ENCODE measurements at regions of chrX and their contacts with region 1.

Region 1: DNA sequence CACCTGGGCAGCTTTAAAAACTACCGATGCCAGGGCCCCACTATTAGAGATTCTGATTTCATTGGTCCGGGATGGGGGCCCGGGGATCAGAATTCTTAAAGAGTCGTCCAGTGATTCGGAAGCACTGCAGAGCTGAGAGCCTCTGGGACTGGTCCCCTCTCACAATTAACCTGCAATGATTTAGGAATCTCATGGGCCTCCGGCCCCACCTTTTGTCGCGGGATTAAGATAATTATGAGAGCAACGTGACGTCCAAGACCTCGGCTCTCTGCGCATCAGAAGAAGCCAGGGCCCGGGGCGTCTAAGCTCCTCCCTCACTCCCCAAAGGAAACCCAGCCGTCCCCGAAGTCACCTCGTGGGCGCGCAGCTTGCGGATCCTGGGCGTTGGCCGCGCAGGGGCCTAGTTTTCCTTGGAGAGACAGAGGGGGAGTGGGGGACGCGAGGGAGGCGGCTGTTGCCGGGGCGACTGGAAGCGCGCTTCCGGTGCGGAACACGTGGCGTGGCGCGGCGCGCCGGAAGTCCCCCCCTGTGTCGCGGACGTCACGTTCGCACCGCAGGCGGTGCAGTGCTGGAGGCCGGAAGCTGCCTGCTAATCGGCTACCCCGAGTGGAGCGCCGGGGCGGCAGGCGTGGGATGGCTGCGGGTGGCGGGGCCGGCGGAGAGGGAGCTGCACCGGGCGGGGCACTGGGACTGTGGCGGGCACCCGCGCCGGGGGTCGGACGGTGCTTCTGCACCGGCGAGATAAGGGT is at the start of gene GEMIN8:
- DNase-seq: peak; percentile 88
- H3K4me3 ChIP-seq: peak within 1 kb of the TSS; percentile 69
- H3K27ac ChIP-seq: peak within 1 kb of the TSS; percentile 78
- H3K4me1 ChIP-seq: no peaks in the 10 kb centered on the region
- H3K27me3 ChIP-seq: no peaks in the 10 kb centered on the region
- CTCF ChIP-seq: no peak
- total RNA-seq, gene GEMIN8: 16.4 to 20.9 TPM

Region 2: GRCh38 chrX:13506574-13506973 is 523.0 kb before region 1 on chrX:
- intact Hi-C with region 1: loop called (anchors 2 kb)
- DNase-seq: peak; percentile 39
- H3K4me3 ChIP-seq: no peak overlapping the region
- H3K27ac ChIP-seq: no peak overlapping the region
- H3K4me1 ChIP-seq: no peaks in the 10 kb centered on the region
- H3K27me3 ChIP-seq: peaks cover 6% of the 10 kb centered on the region
- CTCF ChIP-seq: peak; percentile 80

Region 3: GRCh38 chrX:13750204-13750603 is 279.4 kb before region 1 on chrX:
- intact Hi-C with region 1: loop called (anchors 5 kb)
- DNase-seq: no peak
- H3K4me3 ChIP-seq: no peak overlapping the region
- H3K27ac ChIP-seq: no peak overlapping the region
- H3K4me1 ChIP-seq: no peaks in the 10 kb centered on the region
- H3K27me3 ChIP-seq: no peaks in the 10 kb centered on the region
- CTCF ChIP-seq: peak; percentile 40

Region 4: DNA sequence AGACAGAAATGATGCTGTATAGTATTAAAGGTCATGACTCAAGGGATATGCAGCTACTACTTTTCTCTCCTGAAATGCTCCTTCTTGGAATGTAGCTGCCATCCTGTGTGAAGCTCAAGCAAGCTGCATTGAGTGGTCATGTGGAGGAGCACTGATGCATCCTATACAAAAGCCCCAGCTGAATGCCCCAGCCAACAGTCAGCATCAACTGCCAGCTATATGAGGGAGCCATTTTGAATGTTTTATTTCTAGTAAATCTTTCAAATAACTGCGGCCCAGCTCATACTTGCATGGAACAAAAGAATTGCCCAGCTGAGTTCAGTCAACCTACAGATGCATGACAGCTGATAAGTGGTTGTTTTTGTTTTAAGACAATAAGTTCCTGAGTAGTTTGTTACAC is 165.1 kb after region 1 on chrX:
- intact Hi-C with region 1: no loop called
- DNase-seq: no peak
- H3K4me3 ChIP-seq: no peak overlapping the region
- H3K27ac ChIP-seq: no peak overlapping the region
- H3K4me1 ChIP-seq: no peaks in the 10 kb centered on the region
- H3K27me3 ChIP-seq: no peaks in the 10 kb centered on the region
- CTCF ChIP-seq: no peak